Caco-2 (cell line): ENCODE measurements at regions of chr2 and their contacts with region 1.

Region 1: DNA sequence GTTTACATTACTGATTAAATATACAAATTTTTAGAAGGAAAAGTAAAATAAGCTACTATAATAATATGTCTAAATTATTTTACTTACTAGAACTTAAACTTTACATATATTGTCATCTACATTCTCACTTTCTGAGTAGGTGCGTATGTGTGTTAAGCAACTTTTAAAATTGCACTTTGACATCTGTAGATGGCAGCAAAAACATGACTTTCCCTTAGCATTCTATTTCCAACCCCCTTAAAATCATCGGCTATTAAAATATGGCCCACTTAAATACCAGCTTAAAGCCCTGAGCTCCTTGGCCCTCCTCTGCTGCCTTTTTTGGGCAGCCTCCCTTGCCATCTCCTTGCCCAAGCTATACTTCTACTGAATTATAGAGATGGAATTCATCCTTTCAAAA is 78.0 kb downstream of the UPP2 start:
- DNase-seq: no peak
- H3K4me3 ChIP-seq: no peak overlapping the region
- H3K4me3 Mint-ChIP-seq: no peak overlapping the region
- H3K27ac Mint-ChIP-seq: no peak overlapping the region
- H3K4me1 ChIP-seq: peaks cover 19% of the 10 kb centered on the region
- H3K4me1 Mint-ChIP-seq: peaks cover 25% of the 10 kb centered on the region
- H3K27me3 ChIP-seq: no peaks in the 10 kb centered on the region
- H3K27me3 Mint-ChIP-seq: no peaks in the 10 kb centered on the region
- CTCF ChIP-seq: peak; percentile 31 to 59

Region 2: GRCh38 chr2:158317642-158318041 is 138.0 kb after region 1 on chr2:
- CTCF ChIA-PET with region 1: no interaction called
- POLR2A ChIA-PET with region 1: no interaction called
- intact Hi-C with region 1: loop called (anchors 10 kb)
- DNase-seq: no peak
- H3K4me3 ChIP-seq: no peak overlapping the region
- H3K4me3 Mint-ChIP-seq: no peak overlapping the region
- H3K27ac Mint-ChIP-seq: no peak overlapping the region
- H3K4me1 ChIP-seq: peaks cover 4% of the 10 kb centered on the region
- H3K4me1 Mint-ChIP-seq: no peaks in the 10 kb centered on the region
- H3K27me3 ChIP-seq: no peaks in the 10 kb centered on the region
- H3K27me3 Mint-ChIP-seq: no peaks in the 10 kb centered on the region
- CTCF ChIP-seq: no peak

Region 3: GRCh38 chr2:158619496-158619895 is 439.8 kb after region 1 on chr2:
- CTCF ChIA-PET with region 1: interaction called, 4 read pairs
- POLR2A ChIA-PET with region 1: no interaction called
- intact Hi-C with region 1: loop called (anchors 10 kb)
- DNase-seq: no peak
- H3K4me3 ChIP-seq: no peak overlapping the region
- H3K4me3 Mint-ChIP-seq: no peak overlapping the region
- H3K27ac Mint-ChIP-seq: peak overlapping the region; percentile 25
- H3K4me1 ChIP-seq: peaks cover 11% of the 10 kb centered on the region; the same call in 1 of the 2 replicates
- H3K4me1 Mint-ChIP-seq: peaks cover 7% of the 10 kb centered on the region
- H3K27me3 ChIP-seq: no peaks in the 10 kb centered on the region
- H3K27me3 Mint-ChIP-seq: no peaks in the 10 kb centered on the region
- CTCF ChIP-seq: no peak